ENCODE measurements at regions of chr10 and their contacts with region 1.

Region 1: GRCh38 chr10:30783939-30784500 is 154.5 kb upstream of the LYZL2 start:
- DNase-seq: peak; percentile 60
- ATAC-seq: peak; percentile 83
- H3K4me3 ChIP-seq: peak overlapping the region; percentile 86; the same call in 1 of the 2 replicates
- H3K27ac ChIP-seq: peak overlapping the region; percentile 47
- H3K4me1 ChIP-seq: peaks cover 15% of the 10 kb centered on the region
- H3K27me3 ChIP-seq: no peaks in the 10 kb centered on the region
- CTCF ChIP-seq: peak; percentile 88 to 93 (median 89)
- EP300 ChIP-seq: no peak
- POLR2A ChIP-seq: no peak
- RAD21 ChIP-seq: peak; percentile 89

Region 2: GRCh38 chr10:30553625-30554439 is 230.2 kb before region 1 on chr10:
- CTCF ChIA-PET with region 1: no interaction called
- POLR2A ChIA-PET with region 1: no interaction called
- RAD21 ChIA-PET with region 1: no interaction called
- SMC1A ChIA-PET with region 1: no interaction called
- in situ Hi-C with region 1: no loop called
- intact Hi-C with region 1: no loop called
- DNase-seq: no peak
- ATAC-seq: peak; percentile 41; the same call in 2 of the 3 replicates
- H3K4me3 ChIP-seq: no peak overlapping the region
- H3K27ac ChIP-seq: no peak overlapping the region
- H3K4me1 ChIP-seq: peaks cover 5% of the 10 kb centered on the region
- H3K27me3 ChIP-seq: no peaks in the 10 kb centered on the region
- CTCF ChIP-seq: no peak
- EP300 ChIP-seq: no peak
- POLR2A ChIP-seq: no peak
- RAD21 ChIP-seq: no peak

Region 3: DNA sequence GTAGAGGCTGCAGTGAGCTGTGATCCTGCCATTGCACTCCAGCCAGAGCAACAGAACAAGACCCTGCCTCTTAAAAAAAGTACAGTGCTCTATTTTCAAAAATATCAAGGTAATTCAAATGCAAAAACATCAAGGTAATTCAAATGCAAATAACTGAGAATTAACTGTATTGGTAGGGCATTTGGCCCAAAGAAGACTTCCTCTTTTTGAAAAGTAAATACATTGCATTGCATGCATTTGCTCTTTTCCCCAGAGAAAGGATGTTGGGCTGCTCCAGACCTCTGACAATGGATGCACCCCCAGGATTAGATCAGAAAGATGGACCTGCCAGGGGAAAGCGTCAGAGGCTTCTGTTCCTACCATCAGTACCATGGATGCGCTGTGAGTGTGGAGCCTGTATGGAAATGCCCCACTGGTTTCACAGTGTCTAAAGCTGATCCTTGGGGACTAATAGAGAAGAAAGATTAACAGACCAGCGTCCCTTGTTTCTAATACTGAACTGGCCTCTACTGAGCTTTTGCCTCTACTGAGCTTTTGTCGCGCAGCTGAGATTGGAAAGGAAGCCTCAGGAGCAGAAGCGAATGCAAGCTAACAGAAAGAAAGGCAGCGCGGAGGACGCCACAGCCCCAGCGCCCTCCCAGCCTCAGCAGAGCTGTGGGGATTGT is 60.9 kb before region 1 on chr10:
- CTCF ChIA-PET with region 1: interaction called, 23 read pairs
- POLR2A ChIA-PET with region 1: no interaction called
- RAD21 ChIA-PET with region 1: interaction called, 4 read pairs
- SMC1A ChIA-PET with region 1: interaction called, 4 read pairs
- in situ Hi-C with region 1: no loop called
- intact Hi-C with region 1: loop called (anchors 2 kb)
- DNase-seq: no peak
- ATAC-seq: no peak
- H3K4me3 ChIP-seq: no peak overlapping the region
- H3K27ac ChIP-seq: no peak overlapping the region
- H3K4me1 ChIP-seq: peaks cover 6% of the 10 kb centered on the region
- H3K27me3 ChIP-seq: no peaks in the 10 kb centered on the region
- CTCF ChIP-seq: no peak
- EP300 ChIP-seq: no peak
- POLR2A ChIP-seq: no peak
- RAD21 ChIP-seq: no peak

Region 4: DNA sequence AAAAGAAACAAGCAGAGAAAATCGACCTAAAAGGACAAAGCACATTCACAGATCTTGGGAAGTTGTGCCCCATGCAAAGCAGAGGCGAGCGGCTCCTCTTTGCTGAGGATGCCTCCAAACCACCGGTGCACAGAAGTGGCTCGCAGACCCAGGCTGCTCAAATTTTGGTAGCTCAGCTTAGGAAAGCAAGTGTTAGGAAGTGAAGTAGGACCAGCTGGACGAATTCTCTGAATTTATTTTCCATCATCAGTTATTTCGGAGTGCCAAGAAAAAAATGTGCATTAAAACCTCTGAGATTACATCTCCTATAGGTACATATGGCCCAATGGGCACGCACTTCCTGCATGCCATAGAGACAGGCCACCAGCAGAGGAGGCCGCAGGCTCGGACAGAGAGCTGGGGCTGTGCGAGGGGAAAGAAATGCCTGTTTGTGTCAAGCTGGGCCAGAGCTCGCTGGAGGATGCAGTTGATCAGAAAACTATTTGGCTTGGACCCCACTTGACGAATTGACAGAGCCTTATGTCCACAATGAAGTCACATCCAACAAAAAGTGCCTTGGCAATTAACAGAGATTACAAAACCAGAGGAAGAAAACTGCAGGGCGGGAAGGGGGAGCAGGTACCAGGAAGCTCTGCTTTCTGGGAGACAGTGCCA is 32.2 kb before region 1 on chr10:
- CTCF ChIA-PET with region 1: interaction called, 18 read pairs
- POLR2A ChIA-PET with region 1: no interaction called
- RAD21 ChIA-PET with region 1: interaction called, 10 read pairs
- SMC1A ChIA-PET with region 1: interaction called, 17 read pairs
- in situ Hi-C with region 1: no loop called
- intact Hi-C with region 1: loop called (anchors 1 kb)
- DNase-seq: peak; percentile 32
- ATAC-seq: peak; percentile 87
- H3K4me3 ChIP-seq: no peak overlapping the region
- H3K27ac ChIP-seq: peak overlapping the region; percentile 71
- H3K4me1 ChIP-seq: peaks cover 32% of the 10 kb centered on the region
- H3K27me3 ChIP-seq: no peaks in the 10 kb centered on the region
- CTCF ChIP-seq: peak; percentile 80 to 87 (median 81)
- EP300 ChIP-seq: no peak
- POLR2A ChIP-seq: no peak
- RAD21 ChIP-seq: peak; percentile 97

Region 5: GRCh38 chr10:31083765-31084184 is 299.8 kb after region 1 on chr10:
- CTCF ChIA-PET with region 1: interaction called, 5 read pairs
- POLR2A ChIA-PET with region 1: no interaction called
- RAD21 ChIA-PET with region 1: interaction called, 6 read pairs
- SMC1A ChIA-PET with region 1: interaction called, 11 read pairs
- in situ Hi-C with region 1: no loop called
- intact Hi-C with region 1: no loop called
- DNase-seq: peak; percentile 26
- ATAC-seq: peak; percentile 87
- H3K4me3 ChIP-seq: no peak overlapping the region
- H3K27ac ChIP-seq: no peak overlapping the region
- H3K4me1 ChIP-seq: no peaks in the 10 kb centered on the region
- H3K27me3 ChIP-seq: no peaks in the 10 kb centered on the region
- CTCF ChIP-seq: peak; percentile 55 to 65 (median 62)
- EP300 ChIP-seq: no peak
- POLR2A ChIP-seq: no peak
- RAD21 ChIP-seq: peak; percentile 77

Region 6: DNA sequence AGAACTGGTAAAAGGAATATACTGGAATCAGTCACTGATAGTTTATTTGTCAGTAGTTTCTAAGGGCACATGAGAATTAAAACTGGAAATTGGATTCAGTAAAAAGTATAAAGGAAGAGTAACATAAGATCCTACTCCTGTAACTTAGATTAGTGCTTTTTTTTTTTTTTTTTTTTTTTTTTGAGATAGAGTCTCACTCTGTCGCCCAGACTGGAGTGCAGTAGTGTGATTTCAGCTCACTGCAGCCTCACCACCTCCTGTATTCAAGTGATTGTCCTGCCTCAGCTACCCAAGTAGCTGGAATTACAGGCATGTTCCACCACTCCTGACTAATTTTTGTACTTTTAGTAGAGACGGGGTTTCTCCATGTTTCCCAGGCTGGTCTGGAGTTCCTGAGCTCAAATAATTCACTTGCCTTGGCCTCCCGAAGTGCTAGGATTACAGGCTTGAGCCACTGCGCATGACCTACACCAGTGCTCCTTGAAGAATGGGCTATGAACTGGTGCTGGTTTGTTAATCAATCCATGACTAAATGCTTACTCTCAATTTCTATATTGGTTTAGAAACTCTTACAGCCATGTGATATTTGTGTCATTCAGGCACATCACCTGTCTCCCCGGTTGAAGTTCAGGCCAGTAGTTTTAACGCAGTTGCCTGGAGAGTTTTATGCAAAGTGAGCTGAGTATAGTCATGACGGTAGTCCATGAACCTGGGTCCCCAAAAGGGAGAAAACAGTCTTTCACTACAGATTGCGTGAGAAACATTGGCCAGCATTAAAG is 600.0 kb after region 1 on chr10:
- CTCF ChIA-PET with region 1: no interaction called
- POLR2A ChIA-PET with region 1: interaction called, 10 read pairs
- RAD21 ChIA-PET with region 1: no interaction called
- SMC1A ChIA-PET with region 1: no interaction called
- in situ Hi-C with region 1: no loop called
- intact Hi-C with region 1: loop called (anchors 10 kb)
- DNase-seq: peak; percentile 93
- ATAC-seq: peak; percentile 94
- H3K4me3 ChIP-seq: peak overlapping the region; percentile 49
- H3K27ac ChIP-seq: peak overlapping the region; percentile 97
- H3K4me1 ChIP-seq: peaks cover 19% of the 10 kb centered on the region
- H3K27me3 ChIP-seq: no peaks in the 10 kb centered on the region
- CTCF ChIP-seq: no peak
- EP300 ChIP-seq: peak; percentile 88 to 94
- POLR2A ChIP-seq: peak; percentile 60; the same call in 1 of the 2 replicates
- RAD21 ChIP-seq: peak; percentile 16; the same call in 1 of the 2 replicates

Region 7: DNA sequence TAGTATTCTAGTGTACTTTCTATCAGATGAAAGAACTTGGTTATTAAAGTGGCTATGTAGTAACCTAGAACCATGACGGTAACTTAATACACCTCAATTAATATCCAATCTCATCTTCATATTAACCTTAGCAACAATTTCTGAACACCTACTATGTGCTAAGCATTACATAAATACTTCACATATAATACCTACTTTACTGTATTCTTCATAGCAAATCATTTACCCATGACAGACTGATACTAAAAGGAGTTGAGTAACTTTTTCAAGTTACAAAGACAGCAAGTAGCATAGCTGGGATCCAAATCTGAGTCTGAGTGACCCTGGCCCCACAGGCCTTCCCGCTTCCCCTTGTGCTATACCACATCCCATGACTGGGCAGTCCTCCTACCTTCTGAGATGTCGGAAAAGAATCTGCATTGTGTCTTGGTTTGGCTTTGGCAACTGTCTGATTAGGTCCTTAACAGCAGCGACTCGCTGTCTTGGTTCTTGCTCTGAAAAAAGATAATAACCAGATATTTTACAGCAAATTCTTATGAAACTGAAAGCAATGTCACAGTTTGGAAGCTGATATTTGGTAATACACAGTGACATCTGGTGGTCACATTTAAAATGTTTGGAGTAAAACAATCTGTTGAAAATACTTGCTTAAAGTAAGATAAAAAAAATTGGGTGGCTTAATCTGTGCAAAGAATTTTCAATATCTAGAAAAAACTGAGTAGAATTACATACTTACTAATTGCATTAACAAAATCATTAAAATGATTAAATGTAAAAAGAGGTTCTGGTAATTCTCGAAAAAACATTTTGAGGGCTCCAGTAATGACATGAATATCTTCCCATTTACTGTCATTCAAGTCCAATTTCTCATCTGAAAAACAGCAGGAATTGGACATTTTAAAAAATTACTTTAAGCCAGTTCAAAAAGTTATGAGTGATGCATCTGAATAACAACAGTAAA is 1024.5 kb after region 1 on chr10:
- CTCF ChIA-PET with region 1: interaction called, 16 read pairs
- POLR2A ChIA-PET with region 1: no interaction called
- RAD21 ChIA-PET with region 1: interaction called, 35 read pairs
- SMC1A ChIA-PET with region 1: interaction called, 24 read pairs
- in situ Hi-C with region 1: no loop called
- intact Hi-C with region 1: loop called (anchors 2 kb)
- DNase-seq: peak; percentile 49
- ATAC-seq: peak; percentile 96
- H3K4me3 ChIP-seq: no peak overlapping the region
- H3K27ac ChIP-seq: peak overlapping the region; percentile 77
- H3K4me1 ChIP-seq: peaks cover 3% of the 10 kb centered on the region
- H3K27me3 ChIP-seq: no peaks in the 10 kb centered on the region
- CTCF ChIP-seq: peak; percentile 27 to 59 (median 42); a peak in 5 of 6 replicates
- EP300 ChIP-seq: no peak
- POLR2A ChIP-seq: no peak
- RAD21 ChIP-seq: peak; percentile 78

Measured in GM12878 (cell line).